Activated B cell treated with CpG ODN at 0.5 μM for 24 hours (primary cell): ENCODE measurements at regions of chr11 and their contacts with region 1.

Region 1: GRCh38 chr11:35848616-35849015 is 95.2 kb upstream of the LDLRAD3 start:
- DNase-seq: no peak
- ATAC-seq: no peak
- H3K4me3 Mint-ChIP-seq: no peak overlapping the region
- H3K27ac Mint-ChIP-seq: no peak overlapping the region
- H3K4me1 Mint-ChIP-seq: no peaks in the 10 kb centered on the region
- H3K27me3 Mint-ChIP-seq: peaks cover 14% of the 10 kb centered on the region
- CTCF ChIP-seq: no peak

Region 2: DNA sequence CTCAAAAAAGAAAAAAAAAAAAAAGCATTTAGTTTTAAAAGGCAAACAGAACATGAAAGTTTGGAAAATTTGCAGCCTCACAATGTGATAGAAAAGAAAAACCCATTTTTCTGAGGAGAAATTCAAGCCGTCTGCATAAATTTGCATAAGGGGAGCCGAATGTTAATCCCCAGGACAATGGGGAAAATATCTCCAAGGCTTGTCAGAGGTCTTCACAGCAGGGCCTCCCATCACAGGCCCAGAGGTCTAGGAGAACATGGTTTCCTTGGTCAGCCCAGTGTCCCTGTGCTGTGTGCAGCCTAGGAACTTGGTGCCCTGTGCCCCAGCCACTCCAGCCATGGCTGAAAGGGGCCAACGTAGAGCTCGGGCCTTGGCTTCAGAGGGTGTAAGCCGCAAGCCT is 76.9 kb before region 1 on chr11:
- CTCF ChIA-PET with region 1: no interaction called
- POLR2A ChIA-PET with region 1: no interaction called
- intact Hi-C with region 1: loop called (anchors 2 kb)
- DNase-seq: no peak
- ATAC-seq: no peak
- H3K4me3 Mint-ChIP-seq: no peak overlapping the region
- H3K27ac Mint-ChIP-seq: no peak overlapping the region
- H3K4me1 Mint-ChIP-seq: peaks cover 8% of the 10 kb centered on the region
- H3K27me3 Mint-ChIP-seq: no peaks in the 10 kb centered on the region
- CTCF ChIP-seq: no peak

Region 3: GRCh38 chr11:35794850-35795249 is 53.8 kb before region 1 on chr11:
- CTCF ChIA-PET with region 1: no interaction called
- POLR2A ChIA-PET with region 1: no interaction called
- intact Hi-C with region 1: no loop called
- DNase-seq: no peak
- ATAC-seq: no peak
- H3K4me3 Mint-ChIP-seq: no peak overlapping the region
- H3K27ac Mint-ChIP-seq: no peak overlapping the region
- H3K4me1 Mint-ChIP-seq: peaks cover under 1% of the 10 kb centered on the region
- H3K27me3 Mint-ChIP-seq: no peaks in the 10 kb centered on the region
- CTCF ChIP-seq: no peak

Region 4: GRCh38 chr11:35838071-35838470 is 10.5 kb before region 1 on chr11:
- CTCF ChIA-PET with region 1: no interaction called
- POLR2A ChIA-PET with region 1: no interaction called
- intact Hi-C with region 1: no loop called
- DNase-seq: no peak
- ATAC-seq: no peak
- H3K4me3 Mint-ChIP-seq: no peak overlapping the region
- H3K27ac Mint-ChIP-seq: no peak overlapping the region
- H3K4me1 Mint-ChIP-seq: peaks cover 2% of the 10 kb centered on the region
- H3K27me3 Mint-ChIP-seq: peaks cover 13% of the 10 kb centered on the region
- CTCF ChIP-seq: no peak